ENCODE measurements at regions of chr12 and their contacts with region 1.

Region 1: DNA sequence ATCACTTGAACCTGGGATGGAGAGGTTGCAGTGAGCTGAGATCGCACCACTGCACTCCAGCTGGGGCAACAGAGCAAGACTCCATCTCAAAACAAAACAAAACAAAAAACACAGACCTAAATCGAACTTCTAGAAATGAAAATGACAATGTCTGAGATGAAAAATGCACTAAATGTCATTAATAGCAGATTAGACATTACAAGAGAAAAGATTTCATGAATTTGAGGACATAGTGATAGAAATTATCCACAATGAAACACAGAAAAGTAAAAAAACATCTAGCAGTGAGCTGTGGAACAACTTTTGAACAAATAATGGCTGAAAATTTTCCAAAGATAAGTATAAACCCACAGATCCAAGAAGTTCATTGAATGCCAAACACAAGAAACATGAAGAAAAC is 35.2 kb downstream of the BICDL1 start:
- DNase-seq: no peak
- ATAC-seq: no peak
- H3K4me3 Mint-ChIP-seq: no peak overlapping the region
- H3K27ac Mint-ChIP-seq: no peak overlapping the region
- H3K4me1 Mint-ChIP-seq: peaks cover 9% of the 10 kb centered on the region
- H3K27me3 Mint-ChIP-seq: no peaks in the 10 kb centered on the region

Region 2: DNA sequence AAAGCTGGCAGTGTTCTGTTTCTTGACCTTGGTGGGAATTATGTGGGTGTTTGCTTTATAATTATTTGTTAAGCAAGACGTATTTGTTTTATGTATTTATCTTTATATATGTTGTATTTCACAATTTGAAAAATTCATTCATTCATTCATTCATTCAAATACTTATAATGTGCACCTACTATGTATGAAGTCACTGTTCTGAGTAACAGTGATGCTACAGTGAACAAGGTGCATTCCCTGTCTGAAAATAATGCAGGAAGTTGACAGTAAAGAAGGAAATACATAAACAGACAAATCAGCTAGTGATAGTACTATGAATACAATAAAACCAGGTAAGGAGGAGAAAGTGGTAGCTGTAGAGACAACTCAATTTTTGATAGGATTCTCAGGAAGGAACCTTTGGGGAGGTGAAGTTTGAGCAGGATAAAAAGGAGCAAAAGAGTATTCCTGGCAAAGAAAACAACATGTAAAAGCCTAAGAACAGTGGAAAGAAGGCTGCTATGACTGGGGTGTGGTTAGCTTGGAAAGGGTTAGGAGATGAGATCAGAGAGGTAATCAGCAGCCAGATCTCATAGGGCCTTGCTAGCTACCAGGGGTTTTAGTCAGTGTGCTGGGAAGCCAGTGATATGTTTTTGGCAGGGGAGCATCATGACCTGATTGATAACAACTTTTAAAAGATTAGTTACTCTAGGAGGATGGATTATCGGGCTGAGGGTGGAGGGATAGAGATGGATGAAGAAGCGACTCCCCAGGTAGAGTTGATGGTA is 17.8 kb before region 1 on chr12:
- CTCF ChIA-PET with region 1: no interaction called
- POLR2A ChIA-PET with region 1: interaction called, 10 read pairs
- intact Hi-C with region 1: no loop called
- DNase-seq: peak; percentile 69
- ATAC-seq: peak; percentile 80
- H3K4me3 Mint-ChIP-seq: peak overlapping the region; percentile 63
- H3K27ac Mint-ChIP-seq: peak overlapping the region; percentile 100
- H3K4me1 Mint-ChIP-seq: peaks cover 85% of the 10 kb centered on the region
- H3K27me3 Mint-ChIP-seq: no peaks in the 10 kb centered on the region

Region 3: GRCh38 chr12:120067084-120067869 is 43.1 kb after region 1 on chr12:
- CTCF ChIA-PET with region 1: no interaction called
- POLR2A ChIA-PET with region 1: no interaction called
- intact Hi-C with region 1: no loop called
- DNase-seq: no peak
- ATAC-seq: no peak
- H3K4me3 Mint-ChIP-seq: no peak overlapping the region
- H3K27ac Mint-ChIP-seq: peak overlapping the region; percentile 53
- H3K4me1 Mint-ChIP-seq: peaks cover 6% of the 10 kb centered on the region
- H3K27me3 Mint-ChIP-seq: no peaks in the 10 kb centered on the region

Measured in activated CD4-positive, alpha-beta T cell treated with anti-CD3 and anti-CD28 coated beads for 36 hours (primary cell).